Left colon (tissue), 2 donors: ENCODE measurements at regions of chr11 and their contacts with region 1.

Region 1: GRCh38 chr11:65817835-65818742 is 15.7 kb upstream of the SNX32 start:
- DNase-seq: peak; percentile 90 to 100
- ATAC-seq: peak; percentile 75

Region 2: DNA sequence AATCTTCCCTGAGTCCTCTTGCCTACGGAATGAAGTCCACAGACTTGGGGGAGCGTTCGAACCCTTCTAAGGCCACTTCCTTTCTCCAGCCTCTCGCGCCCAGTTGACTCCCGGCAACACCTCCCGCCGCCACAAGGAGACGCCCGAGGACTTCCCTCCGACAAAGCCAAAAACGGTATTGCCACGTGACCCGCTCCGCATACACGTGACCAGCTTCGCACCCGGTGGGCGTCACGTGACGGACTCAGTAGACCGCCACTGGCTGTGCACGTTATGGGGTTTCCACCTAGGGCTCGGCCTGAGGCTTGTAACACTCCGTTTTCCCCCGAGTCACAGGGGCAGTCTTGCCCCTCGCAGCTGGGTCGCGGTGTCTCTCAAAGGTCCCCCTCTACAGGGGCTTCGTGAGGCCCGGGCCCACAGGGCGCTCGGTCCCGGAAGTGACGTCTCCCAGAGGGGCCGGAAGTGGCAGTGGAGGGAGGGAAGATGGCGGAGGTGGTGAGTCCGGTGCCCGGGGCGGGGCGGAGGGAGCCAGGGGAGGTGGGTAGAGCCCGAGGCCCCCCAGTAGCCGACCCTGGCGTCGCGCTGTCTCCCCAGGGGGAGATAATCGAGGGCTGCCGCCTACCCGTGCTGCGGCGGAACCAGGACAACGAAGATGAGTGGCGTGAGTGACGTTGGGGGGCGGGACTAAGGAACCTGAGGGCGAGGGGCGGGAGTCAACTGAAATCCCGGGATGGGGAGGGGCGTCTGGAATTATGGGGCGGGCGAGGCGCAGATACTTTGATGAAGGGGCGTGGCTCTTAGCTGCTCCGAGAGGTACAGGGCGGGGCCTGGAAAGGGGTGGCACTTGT is 106.1 kb before region 1 on chr11 and contains the start of gene KAT5:
- intact Hi-C with region 1: loop called in 1 of 2 experiments (anchors 5 kb)
- DNase-seq: peak; percentile 99
- ATAC-seq: peak; percentile 84
- total RNA-seq, gene KAT5: 70.8 to 72.3 TPM

Region 3: DNA sequence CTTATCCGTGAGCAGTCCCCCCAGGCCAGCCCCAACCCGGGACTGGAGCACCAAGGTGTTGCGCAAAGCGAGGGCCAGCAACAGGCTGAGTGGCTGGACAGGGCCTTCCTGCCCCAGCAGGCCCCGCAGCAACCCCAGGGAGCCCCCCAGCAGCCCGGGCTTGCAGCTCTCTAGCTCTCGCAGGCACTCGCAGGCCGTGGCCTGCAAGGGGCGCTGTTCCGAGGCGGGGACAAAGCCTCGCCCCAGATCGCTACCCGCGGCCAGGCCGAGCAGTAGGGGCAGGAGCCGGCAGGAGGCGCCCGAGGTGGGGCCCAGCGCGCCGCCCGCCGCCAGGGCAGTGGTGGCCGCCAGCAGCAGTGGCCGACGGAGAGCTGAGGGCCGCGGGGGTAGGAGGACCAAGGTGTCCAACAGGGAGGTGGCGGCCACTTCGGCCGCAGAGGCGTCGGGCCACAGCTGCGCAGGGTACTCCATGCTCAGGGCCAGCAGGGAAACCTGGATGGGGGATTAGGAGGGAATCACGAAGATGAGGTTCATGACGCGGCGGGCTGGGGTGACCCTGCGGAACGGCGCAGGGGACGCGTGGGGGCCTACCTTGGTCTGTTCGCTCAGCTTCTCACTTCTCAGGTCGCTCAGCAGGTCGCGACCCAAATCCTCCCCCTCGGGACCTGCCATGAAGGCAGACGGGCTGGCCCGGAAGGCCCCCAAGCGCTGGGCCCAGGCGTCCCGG is 38.1 kb before region 1 on chr11:
- intact Hi-C with region 1: loop called in 1 of 2 experiments (anchors 5 kb)
- DNase-seq: peak; percentile 74 to 88
- ATAC-seq: peak; percentile 85

Region 4: DNA sequence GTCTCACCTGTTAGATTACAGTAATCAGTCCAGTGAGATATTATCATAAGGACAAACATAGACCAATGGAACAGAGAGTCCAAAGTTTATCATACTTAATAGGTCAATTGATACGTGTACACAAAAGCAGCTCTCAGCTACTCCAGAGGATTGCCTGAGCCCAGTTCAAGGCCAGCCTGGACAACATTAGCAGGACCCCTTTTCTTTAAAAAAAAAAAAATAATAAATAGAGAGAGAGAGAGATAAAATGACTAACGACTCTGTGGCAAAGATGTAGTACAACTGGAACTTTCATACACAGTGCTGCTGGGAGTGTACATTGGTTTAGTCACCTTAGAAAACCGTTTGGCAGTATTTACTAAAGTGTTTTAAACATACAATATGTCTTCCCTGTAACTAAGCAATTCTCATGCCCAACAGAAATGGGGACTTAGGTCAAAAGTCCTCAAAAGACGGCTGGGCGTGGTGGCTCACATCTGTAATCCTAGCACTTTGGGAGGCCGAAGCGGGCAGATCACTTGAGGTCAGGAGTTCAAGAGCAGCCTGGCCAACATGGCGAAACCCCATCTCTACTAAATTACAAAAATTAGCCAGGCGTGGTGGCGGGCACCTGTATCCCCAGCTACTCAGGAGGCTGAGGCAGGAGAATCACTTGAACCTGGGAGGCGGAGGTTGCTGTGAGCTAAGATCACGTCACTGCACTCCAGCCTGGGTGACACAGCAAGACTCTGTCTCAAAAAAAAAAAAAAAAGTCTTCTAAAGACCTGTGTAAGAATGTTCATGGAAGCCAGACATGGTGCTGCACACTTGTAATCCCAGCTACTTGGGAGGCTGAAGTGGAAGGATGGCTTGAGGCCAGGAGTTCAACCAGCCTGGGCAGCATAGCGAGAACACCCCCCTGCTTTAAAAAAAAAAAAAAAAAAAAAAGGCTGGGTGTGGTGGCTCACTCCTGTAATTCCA is 26.4 kb after region 1 on chr11:
- intact Hi-C with region 1: no loop called
- DNase-seq: peak in 1 of 2 donors; percentile 56
- ATAC-seq: peak; percentile 74

Region 5: GRCh38 chr11:65941720-65942310 is 123.7 kb after region 1 on chr11:
- intact Hi-C with region 1: no loop called
- DNase-seq: no peak
- ATAC-seq: no peak